Mammary epithelial cell (primary cell): ENCODE measurements at regions of chr16 and their contacts with region 1.

Region 1: GRCh38 chr16:46607529-46607928 is 13.7 kb downstream of the SHCBP1 start:
- DNase-seq: peak; percentile 14
- H3K4me3 ChIP-seq: no peak overlapping the region
- H3K27ac ChIP-seq: no peak overlapping the region
- H3K4me1 ChIP-seq: no peaks in the 10 kb centered on the region
- H3K27me3 ChIP-seq: no peaks in the 10 kb centered on the region
- CTCF ChIP-seq: peak; percentile 35 to 42

Region 2: DNA sequence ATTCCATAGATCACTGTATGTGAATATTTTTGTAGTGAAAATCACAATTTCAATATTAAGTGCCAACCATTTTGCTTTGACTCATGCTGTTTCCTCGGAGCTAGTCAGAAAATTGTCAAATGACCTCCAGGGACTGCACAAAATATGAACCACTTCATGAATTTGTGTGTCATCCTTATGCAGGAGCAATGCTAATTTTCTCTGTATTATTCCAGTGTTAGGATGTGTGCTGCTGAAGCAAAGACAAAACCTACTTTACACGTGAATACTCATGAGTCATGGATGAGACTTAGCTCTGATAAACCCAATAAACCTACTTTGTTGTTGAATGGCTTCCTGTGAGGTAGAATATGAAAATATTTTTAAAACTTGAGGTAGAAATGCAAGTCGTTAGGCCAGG is 51.6 kb before region 1 on chr16:
- CTCF ChIA-PET with region 1: interaction called, 8 read pairs
- dilution Hi-C with region 1: no loop called
- in situ Hi-C with region 1: loop called (anchors 10 kb)
- intact Hi-C with region 1: loop called (anchors 1 kb)
- DNase-seq: peak; percentile 42
- H3K4me3 ChIP-seq: no peak overlapping the region
- H3K27ac ChIP-seq: no peak overlapping the region
- H3K4me1 ChIP-seq: no peaks in the 10 kb centered on the region
- H3K27me3 ChIP-seq: no peaks in the 10 kb centered on the region
- CTCF ChIP-seq: no peak